Ascending aorta (tissue), 2 donors: ENCODE measurements at regions of chr11 and their contacts with region 1.

Region 1: DNA sequence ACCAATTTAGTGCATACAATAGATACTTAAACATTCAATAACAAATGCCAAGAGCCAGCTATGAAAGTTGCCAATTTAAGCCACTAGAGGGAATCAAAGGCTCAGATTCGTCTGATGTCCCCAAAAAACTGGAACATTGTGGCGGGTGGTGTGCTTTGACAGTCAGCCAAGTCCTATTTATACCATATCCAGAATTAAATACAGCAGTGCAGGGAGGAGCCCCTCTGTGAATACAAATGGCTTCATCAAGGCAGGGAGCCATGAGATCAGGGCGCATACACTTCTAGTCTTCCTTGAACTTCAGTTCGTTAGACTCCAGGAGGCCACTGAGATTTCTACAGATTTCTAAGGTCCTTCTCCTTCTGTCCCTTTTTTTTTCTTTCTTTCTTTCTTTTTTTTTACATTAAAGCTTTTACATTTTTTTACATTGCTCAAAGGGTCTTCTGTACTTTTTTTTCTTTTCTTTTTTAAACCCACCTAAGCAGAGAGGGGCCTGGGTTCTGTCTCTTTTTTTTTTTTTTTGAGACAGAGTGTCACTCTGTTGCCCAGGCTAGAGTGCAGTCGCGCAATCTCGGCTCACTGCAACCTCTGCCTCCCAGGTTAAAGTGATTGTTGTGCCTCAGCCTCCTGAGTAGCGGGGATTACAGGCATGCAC is 41.5 kb upstream of the HSPA8 start:
- DNase-seq: peak in 1 of 2 donors; percentile 89
- H3K4me3 ChIP-seq: no peak overlapping the region
- H3K27ac ChIP-seq: peak overlapping the region; percentile 58 to 65
- H3K4me1 ChIP-seq: peaks cover 3 to 18% of the 10 kb centered on the region in 2 donors
- H3K27me3 ChIP-seq: no peaks in the 10 kb centered on the region
- CTCF ChIP-seq: peak; percentile 57 to 83 (median 61)

Region 2: GRCh38 chr11:123246749-123247495 is 143.5 kb after region 1 on chr11:
- intact Hi-C with region 1: loop called (anchors 1 kb)
- DNase-seq: peak in 1 of 2 donors; percentile 89
- H3K4me3 ChIP-seq: peak overlapping the region in 1 of 2 donors; percentile 24
- H3K27ac ChIP-seq: no peak overlapping the region
- H3K4me1 ChIP-seq: peaks cover 0 to 4% of the 10 kb centered on the region in 2 donors
- H3K27me3 ChIP-seq: no peaks in the 10 kb centered on the region
- CTCF ChIP-seq: peak; percentile 90 to 98 (median 95)

Region 3: GRCh38 chr11:123261345-123262106 is 158.1 kb after region 1 on chr11:
- intact Hi-C with region 1: loop called (anchors 5 kb)
- DNase-seq: peak in 1 of 2 donors; percentile 84
- H3K4me3 ChIP-seq: peak overlapping the region; percentile 43 to 50
- H3K27ac ChIP-seq: no peak overlapping the region
- H3K4me1 ChIP-seq: no peaks in the 10 kb centered on the region
- H3K27me3 ChIP-seq: no peaks in the 10 kb centered on the region
- CTCF ChIP-seq: peak; percentile 73 to 93 (median 93)

Region 4: DNA sequence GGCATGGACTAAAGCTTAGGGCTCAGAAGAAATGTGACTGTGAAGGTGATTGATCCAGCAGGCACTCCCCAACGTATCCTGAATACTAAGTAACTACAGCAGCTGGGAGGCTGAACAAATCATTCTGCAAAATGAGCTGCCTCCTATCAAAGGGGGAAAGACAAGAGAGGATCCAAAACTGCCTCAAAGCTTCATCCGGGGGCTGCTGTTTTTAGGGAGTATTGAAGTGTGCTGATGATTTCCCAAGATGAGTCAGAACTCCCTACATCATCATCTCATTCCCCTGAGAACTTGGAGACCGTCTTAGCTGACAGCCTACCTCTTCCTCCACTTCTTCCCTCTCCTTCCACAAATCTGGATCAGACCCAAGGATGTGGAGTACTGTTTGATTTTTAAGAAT is 218.2 kb after region 1 on chr11:
- intact Hi-C with region 1: no loop called
- DNase-seq: no peak
- H3K4me3 ChIP-seq: no peak overlapping the region
- H3K27ac ChIP-seq: no peak overlapping the region
- H3K4me1 ChIP-seq: no peaks in the 10 kb centered on the region
- H3K27me3 ChIP-seq: no peaks in the 10 kb centered on the region
- CTCF ChIP-seq: no peak